ENCODE measurements at regions of chr17 and their contacts with region 1.

Region 1: GRCh38 chr17:80082403-80083135 is 18.8 kb upstream of the GAA start:
- DNase-seq: peak; percentile 78
- ATAC-seq: peak; percentile 97
- H3K4me3 ChIP-seq: no peak overlapping the region
- H3K27ac ChIP-seq: no peak overlapping the region
- H3K4me1 ChIP-seq: no peaks in the 10 kb centered on the region
- H3K27me3 ChIP-seq: peaks cover 5% of the 10 kb centered on the region; the same call in 1 of the 2 replicates
- CTCF ChIP-seq: peak; percentile 69
- POLR2A ChIP-seq: no peak
- RAD21 ChIP-seq: peak; percentile 76

Region 2: GRCh38 chr17:80008383-80008840 is 74.2 kb before region 1 on chr17:
- CTCF ChIA-PET with region 1: no interaction called
- POLR2A ChIA-PET with region 1: no interaction called
- dilution Hi-C with region 1: no loop called
- in situ Hi-C with region 1: no loop called
- intact Hi-C with region 1: loop called (anchors 5 kb)
- DNase-seq: peak; percentile 48
- ATAC-seq: peak; percentile 93
- H3K4me3 ChIP-seq: no peak overlapping the region
- H3K27ac ChIP-seq: no peak overlapping the region
- H3K4me1 ChIP-seq: no peaks in the 10 kb centered on the region; the same call in 1 of the 2 replicates
- H3K27me3 ChIP-seq: no peaks in the 10 kb centered on the region
- CTCF ChIP-seq: peak; percentile 85
- POLR2A ChIP-seq: no peak
- RAD21 ChIP-seq: peak; percentile 69

Region 3: DNA sequence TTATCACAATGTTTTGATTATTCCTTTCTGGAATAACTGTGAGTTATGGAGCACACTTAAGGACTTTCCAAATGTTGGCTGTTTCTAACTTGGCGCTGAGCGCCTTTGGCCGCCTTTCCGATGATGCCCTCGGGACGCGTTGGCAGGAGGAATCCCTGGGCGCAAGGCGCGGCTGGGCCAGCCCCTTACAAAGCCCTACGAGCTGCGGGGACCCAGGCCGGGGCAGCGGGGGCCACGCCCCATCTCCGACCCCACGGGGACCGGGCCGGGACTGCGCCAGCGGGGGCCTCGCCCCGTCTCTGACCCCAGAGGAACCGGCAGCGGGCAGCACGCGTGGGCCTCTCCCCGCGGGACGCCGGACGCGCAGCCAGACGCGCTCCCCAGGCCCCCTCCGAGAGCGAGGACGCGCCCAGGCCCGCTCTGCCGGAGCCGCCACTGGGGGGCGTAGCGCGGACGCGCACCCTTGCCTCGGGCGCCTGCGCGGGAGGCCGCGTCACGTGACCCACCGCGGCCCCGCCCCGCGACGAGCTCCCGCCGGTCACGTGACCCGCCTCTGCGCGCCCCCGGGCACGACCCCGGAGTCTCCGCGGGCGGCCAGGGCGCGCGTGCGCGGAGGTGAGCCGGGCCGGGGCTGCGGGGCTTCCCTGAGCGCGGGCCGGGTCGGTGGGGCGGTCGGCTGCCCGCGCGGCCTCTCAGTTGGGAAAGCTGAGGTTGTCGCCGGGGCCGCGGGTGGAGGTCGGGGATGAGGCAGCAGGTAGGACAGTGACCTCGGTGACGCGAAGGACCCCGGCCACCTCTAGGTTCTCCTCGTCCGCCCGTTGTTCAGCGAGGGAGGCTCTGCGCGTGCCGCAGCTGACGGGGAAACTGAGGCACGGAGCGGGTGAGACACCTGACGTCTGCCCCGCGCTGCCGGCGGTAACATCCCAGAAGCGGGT is 18.7 kb after region 1 on chr17 and contains the start of gene GAA:
- CTCF ChIA-PET with region 1: interaction called, 14 read pairs
- POLR2A ChIA-PET with region 1: interaction called, 3 read pairs
- dilution Hi-C with region 1: no loop called
- in situ Hi-C with region 1: no loop called
- intact Hi-C with region 1: no loop called
- DNase-seq: peak; percentile 76
- ATAC-seq: peak; percentile 92
- H3K4me3 ChIP-seq: peak within 1 kb of the TSS; percentile 98
- H3K27ac ChIP-seq: peak within 1 kb of the TSS; percentile 76
- H3K4me1 ChIP-seq: peaks cover 6% of the 10 kb centered on the region
- H3K27me3 ChIP-seq: no peaks in the 10 kb centered on the region
- CTCF ChIP-seq: peak; percentile 91
- POLR2A ChIP-seq: peak; percentile 50; the same call in 1 of the 2 replicates
- RAD21 ChIP-seq: peak; percentile 42; the same call in 1 of the 2 replicates
- total RNA-seq, gene GAA: 2.2 and 3.3 TPM in 2 replicates

Region 4: DNA sequence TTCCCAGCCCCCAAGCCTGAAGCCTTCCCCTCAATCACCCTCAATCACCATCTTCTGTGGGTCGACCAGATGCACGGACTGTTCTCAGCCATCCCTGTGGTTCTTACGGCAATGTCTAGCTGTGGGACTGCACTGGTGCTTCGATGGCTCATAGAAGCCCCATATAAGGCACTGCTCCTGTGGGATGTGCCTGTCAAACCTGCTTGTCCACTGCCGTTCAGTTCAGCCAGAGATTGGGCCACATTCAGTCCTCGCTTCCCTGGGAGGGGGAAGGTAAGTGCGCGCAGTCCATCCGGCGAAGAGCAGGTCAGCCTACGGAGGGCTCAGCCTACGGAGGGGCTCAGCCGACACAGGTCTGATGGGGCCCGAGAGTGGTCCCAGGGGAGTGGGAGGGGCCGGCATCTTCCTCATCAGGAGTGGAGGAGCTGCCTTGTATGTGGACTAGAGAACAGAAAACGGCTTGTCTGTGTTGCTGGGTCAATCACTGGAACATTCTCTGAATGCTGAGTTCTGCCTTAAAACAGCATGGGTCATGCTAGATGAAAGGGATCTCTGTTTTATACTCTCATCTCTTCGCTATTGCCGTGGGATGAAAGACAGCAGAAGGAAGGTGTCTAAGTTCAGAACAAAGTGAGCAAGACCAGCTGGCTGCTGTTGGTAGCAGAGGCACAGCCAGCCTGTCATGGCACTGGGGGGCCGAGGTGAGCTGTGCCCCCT is 87.4 kb after region 1 on chr17 and contains the start of gene CARD14:
- CTCF ChIA-PET with region 1: no interaction called
- POLR2A ChIA-PET with region 1: no interaction called
- dilution Hi-C with region 1: no loop called
- in situ Hi-C with region 1: no loop called
- intact Hi-C with region 1: no loop called
- DNase-seq: no peak
- ATAC-seq: no peak
- H3K4me3 ChIP-seq: no peak within 1 kb of the TSS
- H3K27ac ChIP-seq: no peak within 1 kb of the TSS
- H3K4me1 ChIP-seq: no peaks in the 10 kb centered on the region
- H3K27me3 ChIP-seq: peaks cover 28% of the 10 kb centered on the region
- CTCF ChIP-seq: no peak
- POLR2A ChIP-seq: no peak
- RAD21 ChIP-seq: no peak
- total RNA-seq, gene CARD14: not detected in 2 replicates

Region 5: GRCh38 chr17:80219013-80219762 is 136.6 kb after region 1 on chr17:
- CTCF ChIA-PET with region 1: no interaction called
- POLR2A ChIA-PET with region 1: no interaction called
- dilution Hi-C with region 1: no loop called
- in situ Hi-C with region 1: no loop called
- intact Hi-C with region 1: loop called (anchors 1 kb)
- DNase-seq: peak; percentile 80
- ATAC-seq: peak; percentile 18
- H3K4me3 ChIP-seq: peak overlapping the region; percentile 67
- H3K27ac ChIP-seq: peak overlapping the region; percentile 67
- H3K4me1 ChIP-seq: peaks cover 6% of the 10 kb centered on the region; the same call in 1 of the 2 replicates
- H3K27me3 ChIP-seq: no peaks in the 10 kb centered on the region
- CTCF ChIP-seq: no peak
- POLR2A ChIP-seq: no peak
- RAD21 ChIP-seq: no peak

Region 6: GRCh38 chr17:80254396-80255251 is 172.1 kb after region 1 on chr17:
- CTCF ChIA-PET with region 1: no interaction called
- POLR2A ChIA-PET with region 1: no interaction called
- dilution Hi-C with region 1: no loop called
- in situ Hi-C with region 1: no loop called
- intact Hi-C with region 1: loop called (anchors 10 kb)
- DNase-seq: peak; percentile 91
- ATAC-seq: peak; percentile 91
- H3K4me3 ChIP-seq: no peak overlapping the region
- H3K27ac ChIP-seq: peak overlapping the region; percentile 80
- H3K4me1 ChIP-seq: peaks cover 10% of the 10 kb centered on the region
- H3K27me3 ChIP-seq: no peaks in the 10 kb centered on the region
- CTCF ChIP-seq: no peak
- POLR2A ChIP-seq: no peak
- RAD21 ChIP-seq: no peak

Region 7: GRCh38 chr17:80512233-80512632 is 429.7 kb after region 1 on chr17:
- CTCF ChIA-PET with region 1: no interaction called
- POLR2A ChIA-PET with region 1: no interaction called
- dilution Hi-C with region 1: no loop called
- in situ Hi-C with region 1: no loop called
- intact Hi-C with region 1: no loop called
- DNase-seq: peak; percentile 79
- ATAC-seq: peak; percentile 78
- H3K4me3 ChIP-seq: no peak overlapping the region
- H3K27ac ChIP-seq: no peak overlapping the region
- H3K4me1 ChIP-seq: peaks cover 7% of the 10 kb centered on the region
- H3K27me3 ChIP-seq: peaks cover 7% of the 10 kb centered on the region; the same call in 1 of the 2 replicates
- CTCF ChIP-seq: no peak
- POLR2A ChIP-seq: no peak
- RAD21 ChIP-seq: no peak

Region 8: GRCh38 chr17:80964859-80965580 is 882.5 kb after region 1 on chr17:
- CTCF ChIA-PET with region 1: no interaction called
- POLR2A ChIA-PET with region 1: interaction called, 21 read pairs
- dilution Hi-C with region 1: no loop called
- in situ Hi-C with region 1: no loop called
- intact Hi-C with region 1: no loop called
- DNase-seq: no peak
- ATAC-seq: no peak
- H3K4me3 ChIP-seq: no peak overlapping the region
- H3K27ac ChIP-seq: no peak overlapping the region
- H3K4me1 ChIP-seq: peaks cover 9% of the 10 kb centered on the region
- H3K27me3 ChIP-seq: no peaks in the 10 kb centered on the region
- CTCF ChIP-seq: no peak
- POLR2A ChIP-seq: no peak
- RAD21 ChIP-seq: no peak